GM12878 (cell line): ENCODE measurements at regions of chr1 and their contacts with region 1.

Region 1: DNA sequence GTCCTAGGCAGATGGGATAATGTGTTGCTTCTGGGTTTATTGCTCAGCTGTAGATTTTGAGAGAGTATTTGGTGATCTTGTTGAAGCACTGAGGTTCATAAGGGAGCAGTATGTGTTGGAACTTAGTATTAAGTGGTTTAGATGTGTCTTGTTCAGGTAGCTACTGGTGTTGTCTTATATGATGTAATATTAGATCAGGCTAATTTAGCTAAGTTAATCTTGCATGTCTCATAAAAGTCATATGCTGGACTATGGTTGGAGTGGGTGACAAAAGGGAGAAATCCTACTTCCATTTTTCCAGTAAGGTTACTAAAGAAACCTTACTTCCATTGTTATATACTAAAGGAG is 196.4 kb downstream of the CLEC20A start:
- DNase-seq: no peak
- ATAC-seq: no peak
- H3K4me3 ChIP-seq: no peak overlapping the region
- H3K27ac ChIP-seq: no peak overlapping the region
- H3K4me1 ChIP-seq: no peaks in the 10 kb centered on the region
- H3K27me3 ChIP-seq: no peaks in the 10 kb centered on the region
- CTCF ChIP-seq: no peak
- EP300 ChIP-seq: no peak
- POLR2A ChIP-seq: no peak
- RAD21 ChIP-seq: no peak

Region 2: GRCh38 chr1:178271471-178271870 is 28.9 kb before region 1 on chr1:
- CTCF ChIA-PET with region 1: interaction called, 12 read pairs
- POLR2A ChIA-PET with region 1: no interaction called
- RAD21 ChIA-PET with region 1: no interaction called
- SMC1A ChIA-PET with region 1: no interaction called
- in situ Hi-C with region 1: no loop called
- intact Hi-C with region 1: no loop called
- DNase-seq: no peak
- ATAC-seq: no peak
- H3K4me3 ChIP-seq: no peak overlapping the region
- H3K27ac ChIP-seq: no peak overlapping the region
- H3K4me1 ChIP-seq: no peaks in the 10 kb centered on the region
- H3K27me3 ChIP-seq: no peaks in the 10 kb centered on the region
- CTCF ChIP-seq: no peak
- EP300 ChIP-seq: no peak
- POLR2A ChIP-seq: no peak
- RAD21 ChIP-seq: no peak

Region 3: GRCh38 chr1:178282949-178283367 is 17.4 kb before region 1 on chr1:
- CTCF ChIA-PET with region 1: interaction called, 31 read pairs
- POLR2A ChIA-PET with region 1: no interaction called
- RAD21 ChIA-PET with region 1: no interaction called
- SMC1A ChIA-PET with region 1: no interaction called
- in situ Hi-C with region 1: no loop called
- intact Hi-C with region 1: no loop called
- DNase-seq: no peak
- ATAC-seq: peak; percentile 66
- H3K4me3 ChIP-seq: no peak overlapping the region
- H3K27ac ChIP-seq: no peak overlapping the region
- H3K4me1 ChIP-seq: no peaks in the 10 kb centered on the region
- H3K27me3 ChIP-seq: no peaks in the 10 kb centered on the region
- CTCF ChIP-seq: no peak; a peak in 1 of 6 replicates
- EP300 ChIP-seq: no peak
- POLR2A ChIP-seq: no peak
- RAD21 ChIP-seq: peak; percentile 37

Region 4: GRCh38 chr1:178310685-178311105 is 10.4 kb after region 1 on chr1:
- CTCF ChIA-PET with region 1: interaction called, 110 read pairs
- POLR2A ChIA-PET with region 1: interaction called, 6 read pairs
- RAD21 ChIA-PET with region 1: interaction called, 8 read pairs
- SMC1A ChIA-PET with region 1: interaction called, 14 read pairs
- in situ Hi-C with region 1: no loop called
- intact Hi-C with region 1: no loop called
- DNase-seq: peak; percentile 20
- ATAC-seq: peak; percentile 81
- H3K4me3 ChIP-seq: no peak overlapping the region
- H3K27ac ChIP-seq: no peak overlapping the region
- H3K4me1 ChIP-seq: no peaks in the 10 kb centered on the region
- H3K27me3 ChIP-seq: no peaks in the 10 kb centered on the region
- CTCF ChIP-seq: peak; percentile 57 to 71 (median 69)
- EP300 ChIP-seq: no peak
- POLR2A ChIP-seq: no peak
- RAD21 ChIP-seq: peak; percentile 64

Region 5: GRCh38 chr1:178344513-178345082 is 44.3 kb after region 1 on chr1:
- CTCF ChIA-PET with region 1: interaction called, 17 read pairs
- POLR2A ChIA-PET with region 1: no interaction called
- RAD21 ChIA-PET with region 1: interaction called, 3 read pairs
- SMC1A ChIA-PET with region 1: interaction called, 3 read pairs
- in situ Hi-C with region 1: no loop called
- intact Hi-C with region 1: no loop called
- DNase-seq: peak; percentile 1
- ATAC-seq: peak; percentile 90
- H3K4me3 ChIP-seq: no peak overlapping the region
- H3K27ac ChIP-seq: no peak overlapping the region
- H3K4me1 ChIP-seq: no peaks in the 10 kb centered on the region
- H3K27me3 ChIP-seq: no peaks in the 10 kb centered on the region
- CTCF ChIP-seq: peak; percentile 35 to 46 (median 42); a peak in 5 of 6 replicates
- EP300 ChIP-seq: no peak
- POLR2A ChIP-seq: no peak
- RAD21 ChIP-seq: 0 out of 2 replicates have a peak, but pooled peaks have one; percentile 18

Region 6: GRCh38 chr1:178388418-178389145 is 88.3 kb after region 1 on chr1:
- CTCF ChIA-PET with region 1: no interaction called
- POLR2A ChIA-PET with region 1: no interaction called
- RAD21 ChIA-PET with region 1: no interaction called
- SMC1A ChIA-PET with region 1: no interaction called
- in situ Hi-C with region 1: no loop called
- intact Hi-C with region 1: no loop called
- DNase-seq: no peak
- ATAC-seq: no peak; the same call in 2 of the 3 replicates
- H3K4me3 ChIP-seq: no peak overlapping the region
- H3K27ac ChIP-seq: no peak overlapping the region
- H3K4me1 ChIP-seq: no peaks in the 10 kb centered on the region
- H3K27me3 ChIP-seq: no peaks in the 10 kb centered on the region
- CTCF ChIP-seq: no peak
- EP300 ChIP-seq: no peak
- POLR2A ChIP-seq: no peak
- RAD21 ChIP-seq: no peak